Panc1 (cell line): ENCODE measurements at regions of chr3 and their contacts with region 1.

Region 1: DNA sequence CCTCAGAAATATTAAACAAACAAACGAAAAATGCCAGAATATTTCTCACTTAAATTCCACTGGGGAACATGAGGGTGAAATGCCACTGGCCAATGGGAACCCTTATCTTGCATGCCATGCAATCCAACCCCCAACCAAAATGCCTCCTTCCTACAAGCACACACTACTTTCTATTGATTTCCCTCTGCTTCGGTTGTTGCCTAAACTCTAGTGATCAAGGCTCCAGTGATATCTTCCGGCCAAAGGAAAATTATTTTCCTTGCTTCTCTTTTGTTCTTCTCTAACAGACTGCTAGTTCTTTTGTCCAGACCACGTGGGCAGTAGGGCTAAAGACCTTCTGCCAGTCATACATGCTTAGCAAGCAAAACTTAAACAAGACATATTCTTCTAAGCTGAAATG is 115.7 kb downstream of the TMCC1 start:
- DNase-seq: no peak
- ATAC-seq: no peak
- H3K4me3 ChIP-seq: no peak overlapping the region
- H3K27ac ChIP-seq: no peak overlapping the region
- H3K4me1 ChIP-seq: no peaks in the 10 kb centered on the region
- H3K27me3 ChIP-seq: no peaks in the 10 kb centered on the region
- CTCF ChIP-seq: no peak

Region 2: DNA sequence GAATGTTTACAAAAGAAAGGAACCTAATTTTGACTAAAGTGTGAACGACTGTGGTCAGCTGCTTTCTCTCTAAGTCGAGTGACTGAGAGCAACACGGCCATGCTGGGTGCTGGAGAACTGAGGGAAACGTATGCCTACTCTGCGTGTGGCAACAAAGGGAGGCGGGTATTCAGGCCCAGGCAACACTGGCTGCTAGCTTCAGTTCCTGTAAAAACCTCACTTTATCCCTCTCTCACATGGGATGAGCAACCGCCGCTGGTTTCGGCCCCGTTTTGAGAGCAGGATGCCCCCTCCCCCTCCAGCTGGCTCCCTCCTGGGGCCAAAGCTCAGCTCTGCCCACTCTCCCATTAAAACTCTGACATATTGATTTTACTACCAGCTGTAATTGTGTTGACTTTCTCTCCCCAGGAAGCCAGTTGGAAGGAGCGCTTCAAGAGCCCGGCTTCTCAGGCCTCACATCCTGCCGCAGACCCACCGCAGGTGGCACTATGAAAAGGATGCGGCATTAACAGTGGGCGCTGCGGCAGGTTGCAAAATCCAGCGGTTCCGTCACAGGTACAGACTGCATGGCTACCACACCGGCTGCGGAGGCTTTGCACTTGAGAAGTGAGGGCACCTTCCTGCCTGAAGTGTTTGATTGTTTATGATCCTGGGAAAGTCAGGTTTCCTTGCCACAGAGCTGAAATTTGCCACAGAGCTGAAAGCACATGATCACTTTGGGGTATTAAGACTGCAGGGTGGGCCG is 184.0 kb before region 1 on chr3:
- CTCF ChIA-PET with region 1: no interaction called
- POLR2A ChIA-PET with region 1: no interaction called
- in situ Hi-C with region 1: no loop called
- intact Hi-C with region 1: no loop called
- DNase-seq: no peak
- ATAC-seq: peak; percentile 23
- H3K4me3 ChIP-seq: peak overlapping the region; percentile 9 to 43; a peak in 3 of 4 replicates
- H3K27ac ChIP-seq: peak overlapping the region; percentile 99
- H3K4me1 ChIP-seq: peaks cover 97% of the 10 kb centered on the region
- H3K27me3 ChIP-seq: no peaks in the 10 kb centered on the region
- CTCF ChIP-seq: no peak

Region 3: GRCh38 chr3:129801354-129801753 is 23.5 kb after region 1 on chr3:
- CTCF ChIA-PET with region 1: no interaction called
- POLR2A ChIA-PET with region 1: no interaction called
- in situ Hi-C with region 1: no loop called
- intact Hi-C with region 1: loop called (anchors 1 kb)
- DNase-seq: no peak
- ATAC-seq: no peak
- H3K4me3 ChIP-seq: no peak overlapping the region
- H3K27ac ChIP-seq: no peak overlapping the region
- H3K4me1 ChIP-seq: no peaks in the 10 kb centered on the region
- H3K27me3 ChIP-seq: no peaks in the 10 kb centered on the region
- CTCF ChIP-seq: no peak